ENCODE measurements at regions of chr12 and their contacts with region 1.

Region 1: DNA sequence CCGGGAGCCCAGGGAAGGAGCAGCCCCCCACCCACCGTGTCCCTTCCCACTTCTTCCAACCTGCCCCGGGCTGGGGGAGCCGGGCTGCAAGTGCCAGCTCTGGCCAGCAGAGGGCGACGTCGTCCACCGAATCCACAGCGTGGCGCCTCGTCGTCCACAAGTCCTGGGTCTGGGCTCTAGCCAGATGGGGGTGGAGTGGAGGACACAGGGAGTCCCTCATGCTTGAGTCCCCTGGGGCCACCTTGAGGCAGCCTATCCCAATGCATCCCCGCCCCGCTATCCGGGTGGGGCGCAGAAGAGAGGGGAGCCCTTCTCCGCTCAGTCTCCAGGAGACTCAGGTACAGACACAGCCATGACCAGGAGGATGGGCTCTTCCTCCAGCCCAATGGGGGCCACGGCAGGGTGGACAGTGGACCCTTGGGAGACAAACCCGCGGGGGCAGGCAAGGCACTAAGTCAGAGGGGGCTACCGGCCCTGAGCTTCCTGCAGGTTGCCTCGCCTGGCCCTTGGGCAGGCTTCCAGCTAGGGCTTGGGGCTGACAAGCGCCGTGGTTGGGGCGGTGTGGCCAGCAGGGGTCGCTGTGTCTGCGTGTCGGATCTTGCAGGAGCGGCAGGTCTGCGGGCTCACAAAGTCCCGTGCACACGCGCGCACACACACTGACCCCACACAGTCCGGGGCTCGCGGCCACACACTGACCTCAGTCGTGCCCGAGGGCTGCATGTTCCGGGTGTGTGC is 5.5 kb downstream of the AQP5 start:
- DNase-seq: peak; percentile 97
- ATAC-seq: peak; percentile 92
- H3K4me3 Mint-ChIP-seq: peak overlapping the region; percentile 34
- H3K27ac Mint-ChIP-seq: no peak overlapping the region
- H3K4me1 Mint-ChIP-seq: no peaks in the 10 kb centered on the region
- H3K27me3 Mint-ChIP-seq: peaks cover 32% of the 10 kb centered on the region

Region 2: GRCh38 chr12:49930515-49931288 is 36.5 kb before region 1 on chr12:
- CTCF ChIA-PET with region 1: interaction called, 12 read pairs
- POLR2A ChIA-PET with region 1: no interaction called
- intact Hi-C with region 1: no loop called
- DNase-seq: no peak
- ATAC-seq: peak; percentile 68
- H3K4me3 Mint-ChIP-seq: no peak overlapping the region
- H3K27ac Mint-ChIP-seq: no peak overlapping the region
- H3K4me1 Mint-ChIP-seq: peaks cover 7% of the 10 kb centered on the region
- H3K27me3 Mint-ChIP-seq: no peaks in the 10 kb centered on the region

Region 3: GRCh38 chr12:49983892-49984291 is 16.7 kb after region 1 on chr12:
- CTCF ChIA-PET with region 1: interaction called, 98 read pairs
- POLR2A ChIA-PET with region 1: no interaction called
- intact Hi-C with region 1: no loop called
- DNase-seq: no peak
- ATAC-seq: no peak
- H3K4me3 Mint-ChIP-seq: no peak overlapping the region
- H3K27ac Mint-ChIP-seq: no peak overlapping the region
- H3K4me1 Mint-ChIP-seq: peaks cover 6% of the 10 kb centered on the region
- H3K27me3 Mint-ChIP-seq: no peaks in the 10 kb centered on the region

Region 4: GRCh38 chr12:50025187-50026059 is 58.2 kb after region 1 on chr12 and contains the start of gene RACGAP1:
- CTCF ChIA-PET with region 1: interaction called, 10 read pairs
- POLR2A ChIA-PET with region 1: no interaction called
- intact Hi-C with region 1: no loop called
- DNase-seq: peak; percentile 97
- ATAC-seq: peak; percentile 98
- H3K4me3 Mint-ChIP-seq: peak within 1 kb of the TSS; percentile 90
- H3K27ac Mint-ChIP-seq: peak within 1 kb of the TSS; percentile 95
- H3K4me1 Mint-ChIP-seq: peaks cover 23% of the 10 kb centered on the region
- H3K27me3 Mint-ChIP-seq: no peaks in the 10 kb centered on the region
- total RNA-seq, gene RACGAP1: 99.7 to 118 TPM

Region 5: DNA sequence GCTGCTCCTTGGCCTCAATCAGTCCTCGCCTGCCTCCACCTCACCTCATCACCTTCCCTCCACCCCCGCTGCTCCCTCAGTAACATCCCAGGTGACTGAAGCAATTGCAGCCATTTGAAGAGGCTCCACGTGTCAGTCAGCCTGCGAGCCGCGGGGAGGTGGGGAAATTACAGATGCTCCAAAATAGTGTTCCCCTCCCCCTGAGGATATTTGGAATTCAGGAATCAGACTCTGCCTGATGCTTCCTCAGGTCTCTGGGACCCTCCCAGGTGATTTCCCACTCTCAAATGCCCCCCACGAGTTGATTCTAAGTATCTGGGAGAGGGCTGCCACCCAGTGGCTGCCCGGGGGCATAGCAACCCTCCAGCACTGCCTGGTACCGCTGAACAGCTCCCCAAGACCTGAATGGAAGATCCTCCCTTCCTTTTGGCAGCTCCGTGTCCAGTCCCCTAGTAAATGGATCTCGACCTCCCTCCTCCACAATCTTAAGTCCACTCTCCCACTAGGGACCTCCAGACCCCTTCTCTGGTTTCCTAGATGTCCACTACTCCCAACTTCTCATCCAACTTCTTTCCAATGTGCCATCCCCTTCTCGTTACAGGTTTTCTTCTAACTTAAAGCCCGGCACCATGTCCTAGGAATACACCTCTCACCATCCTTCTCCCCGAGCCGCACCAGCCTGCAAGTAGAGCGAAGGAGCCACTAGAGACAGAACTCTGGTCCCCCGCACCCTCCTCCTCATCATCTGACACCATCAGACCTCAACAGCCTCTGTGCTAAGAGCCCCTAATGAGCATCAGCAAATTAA is 88.8 kb after region 1 on chr12:
- CTCF ChIA-PET with region 1: interaction called, 36 read pairs
- POLR2A ChIA-PET with region 1: no interaction called
- intact Hi-C with region 1: loop called (anchors 1 kb)
- DNase-seq: peak; percentile 79
- ATAC-seq: peak; percentile 43
- H3K4me3 Mint-ChIP-seq: peak overlapping the region; percentile 85
- H3K27ac Mint-ChIP-seq: peak overlapping the region; percentile 32
- H3K4me1 Mint-ChIP-seq: peaks cover 33% of the 10 kb centered on the region
- H3K27me3 Mint-ChIP-seq: peaks cover 39% of the 10 kb centered on the region

Measured in activated CD4-positive, alpha-beta T cell treated with anti-CD3 and anti-CD28 coated beads for 36 hours (primary cell).